Activated B cell treated with CpG ODN at 0.5 μM for 24 hours (primary cell): ENCODE measurements at regions of chr1 and their contacts with region 1.

Region 1: DNA sequence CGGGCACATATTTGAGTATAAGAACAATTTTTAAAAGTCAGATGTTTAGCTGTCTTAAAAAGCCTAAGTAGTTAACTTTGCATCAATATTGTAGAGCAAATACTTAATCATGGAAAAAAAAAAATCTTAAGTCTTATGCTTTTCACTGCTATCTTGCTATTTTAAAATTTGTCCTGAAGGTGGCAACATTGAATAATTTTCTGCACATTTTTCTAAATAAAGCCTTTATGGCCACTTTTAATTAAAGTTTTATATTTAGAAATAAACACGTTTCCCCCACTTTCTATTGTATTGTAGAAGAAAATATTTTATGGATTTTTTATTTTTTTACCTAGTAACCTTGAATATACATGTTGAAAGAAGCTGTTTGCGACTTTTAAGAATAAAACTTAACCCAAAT is 198.8 kb downstream of the AMY1C start:
- DNase-seq: no peak
- ATAC-seq: no peak
- H3K4me3 Mint-ChIP-seq: no peak overlapping the region
- H3K27ac Mint-ChIP-seq: no peak overlapping the region
- H3K4me1 Mint-ChIP-seq: no peaks in the 10 kb centered on the region
- H3K27me3 Mint-ChIP-seq: no peaks in the 10 kb centered on the region
- CTCF ChIP-seq: no peak

Region 2: DNA sequence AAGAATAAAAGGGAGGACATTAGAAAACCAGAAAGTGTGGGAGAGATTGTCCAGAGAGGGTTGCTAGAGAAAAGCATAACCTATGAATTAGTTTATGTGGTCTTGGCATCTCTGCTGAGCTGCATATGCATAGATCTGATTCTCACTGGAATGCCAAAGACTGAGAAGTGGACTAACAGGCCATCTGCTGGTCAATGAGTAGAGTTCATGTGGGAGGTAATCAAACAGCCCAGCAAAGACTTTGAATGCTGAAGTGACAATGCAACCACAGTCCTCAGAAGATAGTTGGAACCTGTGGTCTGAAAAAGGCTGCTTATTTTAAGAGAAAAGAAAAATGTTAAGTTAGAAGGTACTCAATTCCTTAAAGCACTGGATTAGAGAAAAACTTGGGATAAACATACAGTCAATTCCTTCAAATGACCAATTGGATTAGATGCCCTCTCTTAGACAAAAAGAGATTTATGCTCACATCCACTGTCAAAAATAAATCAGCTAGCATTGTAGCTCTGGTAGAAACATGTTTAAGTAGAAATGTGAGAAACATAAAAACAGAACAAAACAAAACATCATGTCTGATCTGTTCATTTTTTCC is 184.0 kb after region 1 on chr1:
- CTCF ChIA-PET with region 1: no interaction called
- POLR2A ChIA-PET with region 1: no interaction called
- intact Hi-C with region 1: loop called (anchors 10 kb)
- DNase-seq: no peak
- ATAC-seq: no peak
- H3K4me3 Mint-ChIP-seq: no peak overlapping the region
- H3K27ac Mint-ChIP-seq: no peak overlapping the region
- H3K4me1 Mint-ChIP-seq: no peaks in the 10 kb centered on the region
- H3K27me3 Mint-ChIP-seq: no peaks in the 10 kb centered on the region
- CTCF ChIP-seq: no peak

Region 3: GRCh38 chr1:104636581-104636980 is 688.1 kb after region 1 on chr1:
- CTCF ChIA-PET with region 1: no interaction called
- POLR2A ChIA-PET with region 1: no interaction called
- intact Hi-C with region 1: loop called (anchors 2 kb)
- DNase-seq: no peak
- ATAC-seq: peak; percentile 60
- H3K4me3 Mint-ChIP-seq: no peak overlapping the region
- H3K27ac Mint-ChIP-seq: no peak overlapping the region
- H3K4me1 Mint-ChIP-seq: no peaks in the 10 kb centered on the region
- H3K27me3 Mint-ChIP-seq: no peaks in the 10 kb centered on the region
- CTCF ChIP-seq: no peak

Region 4: GRCh38 chr1:105793536-105794146 is 1845.1 kb after region 1 on chr1:
- CTCF ChIA-PET with region 1: no interaction called
- POLR2A ChIA-PET with region 1: no interaction called
- intact Hi-C with region 1: loop called (anchors 5 kb)
- DNase-seq: no peak
- ATAC-seq: no peak
- H3K4me3 Mint-ChIP-seq: no peak overlapping the region
- H3K27ac Mint-ChIP-seq: no peak overlapping the region
- H3K4me1 Mint-ChIP-seq: no peaks in the 10 kb centered on the region
- H3K27me3 Mint-ChIP-seq: no peaks in the 10 kb centered on the region
- CTCF ChIP-seq: no peak